Activated B cell treated with CpG ODN at 0.5 μM for 24 hours (primary cell): ENCODE measurements at regions of chr12 and their contacts with region 1.

Region 1: DNA sequence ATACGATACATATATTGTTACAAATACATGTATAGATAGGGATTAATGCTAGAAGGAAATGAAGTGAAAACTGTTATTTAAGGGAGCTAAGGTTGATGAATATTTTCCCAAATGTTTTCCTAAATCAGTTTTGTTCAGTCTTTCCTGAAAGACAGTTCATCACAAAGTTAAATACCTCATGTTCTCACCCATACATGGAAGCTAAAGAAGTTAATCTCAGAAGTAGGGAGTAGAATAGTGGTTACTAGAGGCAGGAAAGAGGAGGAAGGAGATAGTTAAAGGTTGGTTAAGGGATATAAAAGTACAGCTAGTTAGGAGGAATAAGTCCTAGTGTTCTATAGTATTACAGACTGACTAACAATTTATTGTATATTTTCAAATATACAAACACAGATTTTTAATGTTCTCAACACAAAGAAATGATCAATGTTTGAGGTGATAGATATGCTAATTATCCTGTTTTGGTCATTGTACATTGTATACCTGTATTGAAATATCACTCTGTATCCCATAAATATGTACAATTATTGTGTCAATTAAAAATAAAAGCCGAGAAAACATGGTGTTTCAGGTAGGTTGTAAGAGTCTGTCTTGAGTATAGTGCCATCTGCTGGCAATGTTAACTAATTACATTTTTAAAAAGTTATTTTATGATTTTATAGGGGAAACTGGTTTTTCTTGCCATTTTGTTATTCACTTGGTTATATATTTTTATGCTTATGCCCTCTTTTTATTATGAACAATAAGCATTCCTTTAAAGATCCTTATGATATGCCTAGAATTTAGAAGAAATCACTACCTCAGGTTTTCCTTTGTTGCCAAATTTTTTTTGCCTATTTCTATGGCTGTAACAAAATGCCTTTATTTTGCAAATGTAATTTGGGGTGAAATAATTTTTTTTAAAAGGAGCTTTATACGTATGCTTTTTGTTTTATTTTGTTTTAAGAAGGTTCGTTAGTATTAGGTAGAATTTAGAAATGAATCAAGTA is 26.9 kb downstream of the ZDHHC17 start:
- DNase-seq: no peak
- ATAC-seq: no peak
- H3K4me3 Mint-ChIP-seq: no peak overlapping the region
- H3K27ac Mint-ChIP-seq: no peak overlapping the region
- H3K4me1 Mint-ChIP-seq: peaks cover 35% of the 10 kb centered on the region
- H3K27me3 Mint-ChIP-seq: no peaks in the 10 kb centered on the region
- CTCF ChIP-seq: no peak

Region 2: GRCh38 chr12:76470028-76470939 is 320.6 kb before region 1 on chr12:
- CTCF ChIA-PET with region 1: no interaction called
- POLR2A ChIA-PET with region 1: no interaction called
- intact Hi-C with region 1: loop called (anchors 10 kb)
- DNase-seq: no peak
- ATAC-seq: peak; percentile 84
- H3K4me3 Mint-ChIP-seq: no peak overlapping the region
- H3K27ac Mint-ChIP-seq: no peak overlapping the region
- H3K4me1 Mint-ChIP-seq: peaks cover 12% of the 10 kb centered on the region
- H3K27me3 Mint-ChIP-seq: no peaks in the 10 kb centered on the region
- CTCF ChIP-seq: no peak

Region 3: DNA sequence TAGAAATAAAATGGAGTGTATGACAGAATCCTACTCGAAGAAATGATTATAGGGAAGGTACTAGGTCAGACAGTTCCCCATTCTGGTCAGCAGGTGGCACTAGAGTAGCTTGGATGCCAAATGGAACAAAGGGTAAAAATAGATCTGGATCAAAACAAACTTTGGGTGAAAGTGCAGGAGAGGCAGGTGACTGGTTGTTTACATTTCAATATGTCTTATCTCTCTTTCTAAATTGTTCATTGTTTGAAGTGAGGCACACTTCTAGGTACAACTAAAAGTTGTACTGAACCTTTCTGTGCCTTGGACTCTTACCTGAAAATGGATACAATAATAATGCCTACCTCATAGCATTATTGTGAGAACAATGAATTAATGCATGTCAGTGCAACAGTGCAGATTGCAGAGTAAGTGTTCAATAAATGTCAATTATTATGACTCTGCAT is 169.3 kb before region 1 on chr12:
- CTCF ChIA-PET with region 1: interaction called, 61 read pairs
- POLR2A ChIA-PET with region 1: no interaction called
- intact Hi-C with region 1: loop called (anchors 1 kb)
- DNase-seq: no peak
- ATAC-seq: peak; percentile 70
- H3K4me3 Mint-ChIP-seq: no peak overlapping the region
- H3K27ac Mint-ChIP-seq: no peak overlapping the region
- H3K4me1 Mint-ChIP-seq: peaks cover 3% of the 10 kb centered on the region
- H3K27me3 Mint-ChIP-seq: no peaks in the 10 kb centered on the region
- CTCF ChIP-seq: peak; percentile 47

Region 4: GRCh38 chr12:76688631-76689030 is 102.2 kb before region 1 on chr12:
- CTCF ChIA-PET with region 1: interaction called, 4 read pairs
- POLR2A ChIA-PET with region 1: no interaction called
- intact Hi-C with region 1: loop called (anchors 1 kb)
- DNase-seq: no peak
- ATAC-seq: no peak
- H3K4me3 Mint-ChIP-seq: no peak overlapping the region
- H3K27ac Mint-ChIP-seq: no peak overlapping the region
- H3K4me1 Mint-ChIP-seq: no peaks in the 10 kb centered on the region
- H3K27me3 Mint-ChIP-seq: no peaks in the 10 kb centered on the region
- CTCF ChIP-seq: no peak

Region 5: GRCh38 chr12:76757694-76758093 is 33.2 kb before region 1 on chr12:
- CTCF ChIA-PET with region 1: interaction called, 8 read pairs
- POLR2A ChIA-PET with region 1: no interaction called
- intact Hi-C with region 1: loop called (anchors 5 kb)
- DNase-seq: no peak
- ATAC-seq: no peak
- H3K4me3 Mint-ChIP-seq: no peak overlapping the region
- H3K27ac Mint-ChIP-seq: no peak overlapping the region
- H3K4me1 Mint-ChIP-seq: no peaks in the 10 kb centered on the region
- H3K27me3 Mint-ChIP-seq: peaks cover 5% of the 10 kb centered on the region
- CTCF ChIP-seq: no peak

Region 6: DNA sequence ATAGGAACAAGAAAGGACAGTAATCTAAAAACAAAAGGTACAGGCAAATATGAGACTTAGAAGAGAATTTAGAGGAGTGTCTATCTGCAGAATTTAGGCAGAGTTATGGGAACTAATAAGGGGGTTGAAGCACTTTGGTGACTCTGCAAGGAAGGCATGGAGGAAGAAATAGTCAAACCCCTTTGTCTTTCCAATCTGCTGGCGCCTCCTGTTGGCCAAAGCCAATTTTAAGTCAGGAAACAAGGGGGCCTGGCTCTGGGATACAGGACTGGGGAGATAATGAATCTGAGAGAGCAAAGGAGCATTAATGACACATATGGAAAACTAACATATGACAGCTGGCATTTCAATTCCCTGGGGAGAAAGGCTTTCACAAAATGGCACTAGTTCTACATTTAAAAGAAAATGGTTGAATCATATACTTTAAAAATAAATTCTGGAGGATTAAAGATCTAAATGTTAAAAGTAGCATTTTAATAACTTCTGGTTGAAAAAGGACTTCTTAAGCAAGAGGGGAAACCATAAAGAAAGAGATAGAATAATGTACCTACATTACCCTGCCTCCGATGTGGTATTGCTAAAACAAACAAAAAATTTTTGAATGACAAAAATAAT is 136.4 kb after region 1 on chr12:
- CTCF ChIA-PET with region 1: no interaction called
- POLR2A ChIA-PET with region 1: no interaction called
- intact Hi-C with region 1: loop called (anchors 1 kb)
- DNase-seq: no peak
- ATAC-seq: no peak
- H3K4me3 Mint-ChIP-seq: no peak overlapping the region
- H3K27ac Mint-ChIP-seq: no peak overlapping the region
- H3K4me1 Mint-ChIP-seq: no peaks in the 10 kb centered on the region
- H3K27me3 Mint-ChIP-seq: peaks cover 5% of the 10 kb centered on the region
- CTCF ChIP-seq: no peak

Region 7: GRCh38 chr12:77010691-77011548 is 220.1 kb after region 1 on chr12:
- CTCF ChIA-PET with region 1: interaction called, 10 read pairs
- POLR2A ChIA-PET with region 1: no interaction called
- intact Hi-C with region 1: loop called (anchors 1 kb)
- DNase-seq: peak; percentile 29
- ATAC-seq: peak; percentile 79
- H3K4me3 Mint-ChIP-seq: no peak overlapping the region
- H3K27ac Mint-ChIP-seq: no peak overlapping the region
- H3K4me1 Mint-ChIP-seq: peaks cover 4% of the 10 kb centered on the region
- H3K27me3 Mint-ChIP-seq: peaks cover 8% of the 10 kb centered on the region
- CTCF ChIP-seq: peak; percentile 69